ENCODE measurements at regions of chrX and their contacts with region 1.

Region 1: GRCh38 chrX:54184474-54184873 is 1.4 kb upstream of the FAM120C start:
- DNase-seq: no peak
- ATAC-seq: no peak
- H3K4me3 ChIP-seq: no peak overlapping the region
- H3K27ac ChIP-seq: no peak overlapping the region
- H3K4me1 ChIP-seq: peaks cover 11% of the 10 kb centered on the region
- H3K27me3 ChIP-seq: no peaks in the 10 kb centered on the region
- CTCF ChIP-seq: no peak

Region 2: GRCh38 chrX:53969540-53969939 is 214.9 kb before region 1 on chrX:
- CTCF ChIA-PET with region 1: no interaction called
- POLR2A ChIA-PET with region 1: no interaction called
- in situ Hi-C with region 1: no loop called
- intact Hi-C with region 1: no loop called
- DNase-seq: no peak
- ATAC-seq: no peak
- H3K4me3 ChIP-seq: no peak overlapping the region
- H3K27ac ChIP-seq: no peak overlapping the region
- H3K4me1 ChIP-seq: no peaks in the 10 kb centered on the region
- H3K27me3 ChIP-seq: no peaks in the 10 kb centered on the region
- CTCF ChIP-seq: no peak

Region 3: DNA sequence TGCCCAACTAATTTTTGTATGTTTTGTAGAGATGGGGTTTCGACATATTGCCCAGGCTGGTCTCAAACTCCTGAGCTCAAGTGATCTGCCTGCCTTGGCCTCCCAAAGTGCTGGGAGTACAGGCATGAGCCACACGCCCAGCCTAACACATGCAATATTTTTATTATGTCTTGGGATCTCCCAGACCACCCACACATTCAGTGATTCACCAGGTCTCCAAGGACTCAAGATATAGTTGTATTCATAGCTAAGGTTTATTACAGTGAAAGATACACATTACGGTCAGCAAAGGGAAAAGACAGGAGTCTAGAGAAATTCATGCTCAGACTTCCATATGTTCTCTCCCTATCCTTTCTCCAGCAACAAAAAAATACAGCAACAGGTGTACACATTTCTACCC is 24.1 kb after region 1 on chrX:
- CTCF ChIA-PET with region 1: no interaction called
- POLR2A ChIA-PET with region 1: interaction called, 15 read pairs
- in situ Hi-C with region 1: no loop called
- intact Hi-C with region 1: no loop called
- DNase-seq: no peak
- ATAC-seq: no peak
- H3K4me3 ChIP-seq: no peak overlapping the region
- H3K27ac ChIP-seq: no peak overlapping the region
- H3K4me1 ChIP-seq: no peaks in the 10 kb centered on the region
- H3K27me3 ChIP-seq: no peaks in the 10 kb centered on the region
- CTCF ChIP-seq: no peak